Left cardiac atrium (tissue), 4 donors: ENCODE measurements at regions of chr10 and their contacts with region 1.

Region 1: DNA sequence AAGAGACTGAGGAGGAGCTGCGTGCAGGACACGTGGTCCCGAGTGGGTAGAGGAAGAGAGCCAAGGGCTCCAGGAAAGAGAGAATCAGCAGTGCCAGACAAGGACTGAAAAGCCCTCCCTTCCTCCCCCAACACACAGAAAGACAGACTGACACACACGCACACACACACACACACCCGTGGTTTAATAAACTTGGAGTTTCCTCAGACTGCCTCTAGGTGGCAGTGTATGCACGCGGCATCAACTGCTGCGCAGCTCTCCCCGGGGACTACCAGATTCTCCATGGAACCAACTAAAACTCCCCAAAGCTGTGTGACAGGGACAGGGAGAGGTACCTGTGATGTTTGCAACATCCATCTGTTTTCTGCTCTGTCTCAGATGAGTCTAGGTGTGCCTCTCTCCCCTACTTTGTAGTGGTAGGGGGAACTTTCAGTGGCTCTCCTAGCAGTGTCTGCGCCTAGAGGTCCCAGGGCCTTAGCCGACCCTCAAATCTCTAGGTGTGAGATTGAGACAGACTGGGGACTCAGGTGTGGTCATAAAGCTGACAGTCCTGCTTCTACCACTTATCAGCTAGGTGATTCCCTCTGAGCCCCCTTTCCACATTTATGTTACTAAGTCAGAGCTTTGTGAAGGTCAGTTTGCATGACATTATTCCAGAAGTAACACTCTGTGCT is 9.3 kb upstream of the TSPAN14 start:
- DNase-seq: peak; percentile 72
- ATAC-seq: peak; percentile 94 to 96

Region 2: DNA sequence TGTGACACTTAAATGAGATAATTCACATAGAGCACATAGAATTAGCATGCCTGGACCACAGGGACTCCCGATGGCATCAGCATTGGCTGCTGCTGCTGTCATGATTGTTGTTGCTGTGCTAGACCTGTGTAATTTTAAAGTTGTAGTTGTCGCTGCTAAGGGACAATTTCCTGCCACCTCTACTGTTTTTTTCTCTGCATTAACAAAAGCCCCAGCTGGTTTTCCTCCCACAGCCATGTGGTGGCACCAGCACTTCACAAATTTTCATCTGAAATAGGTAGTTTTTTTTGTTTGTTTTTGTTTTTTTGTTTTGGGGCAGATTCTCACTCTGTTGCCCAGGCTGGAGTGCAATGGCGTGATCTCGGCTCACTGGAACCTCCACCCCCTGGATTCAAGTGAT is 61.8 kb before region 1 on chr10:
- intact Hi-C with region 1: loop called (anchors 2 to 10 kb)
- DNase-seq: peak; percentile 36
- ATAC-seq: peak in 1 of 2 donors; percentile 59

Region 3: DNA sequence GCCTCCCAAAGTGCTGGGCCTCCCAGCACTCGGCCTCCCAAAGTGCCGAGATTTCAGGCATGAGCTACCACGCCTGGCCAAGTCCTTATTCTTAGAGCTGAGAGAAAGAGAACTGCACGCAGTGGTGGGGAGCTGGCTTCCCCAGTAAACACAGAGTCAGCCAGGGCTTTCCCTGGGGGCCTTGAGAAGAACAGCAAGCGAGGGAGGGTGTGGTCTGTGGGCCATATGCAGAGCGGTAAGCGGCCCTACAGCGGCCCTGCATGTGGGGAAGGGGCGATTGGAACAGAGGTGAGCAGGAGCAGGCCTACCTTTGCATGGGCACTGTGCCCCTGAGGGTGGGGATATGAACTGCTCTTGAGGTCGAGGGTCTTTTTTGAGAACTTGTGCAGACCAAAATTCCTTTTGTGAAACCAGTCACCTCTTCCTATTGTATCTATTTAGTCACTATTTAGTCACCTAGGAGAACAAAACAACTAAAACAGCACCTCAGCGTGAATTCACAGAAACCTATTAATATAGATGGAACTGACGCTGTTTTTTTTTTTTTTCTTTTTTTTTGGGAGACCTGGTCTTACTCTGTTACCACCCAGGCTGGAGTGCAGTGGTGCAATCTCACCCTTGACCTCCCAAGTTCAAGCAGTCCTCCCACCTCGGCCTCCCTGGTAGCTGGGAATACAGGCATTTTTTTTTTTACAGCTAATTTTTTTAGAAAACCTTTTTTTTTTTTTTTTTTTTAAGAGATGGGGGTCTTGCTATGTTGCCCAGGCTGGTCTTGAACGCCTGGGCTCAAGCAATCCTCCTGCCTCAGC is 56.0 kb after region 1 on chr10:
- intact Hi-C with region 1: loop called (anchors 2 to 5 kb)
- DNase-seq: peak; percentile 69
- ATAC-seq: peak in 1 of 2 donors; percentile 28

Region 4: GRCh38 chr10:80588546-80588945 is 143.8 kb after region 1 on chr10:
- intact Hi-C with region 1: no loop called
- DNase-seq: no peak
- ATAC-seq: no peak

Region 5: GRCh38 chr10:80599424-80599847 is 154.7 kb after region 1 on chr10:
- intact Hi-C with region 1: loop called in 1 of 2 experiments (anchors 5 kb)
- DNase-seq: peak; percentile 41
- ATAC-seq: peak in 1 of 2 donors; percentile 71

Region 6: DNA sequence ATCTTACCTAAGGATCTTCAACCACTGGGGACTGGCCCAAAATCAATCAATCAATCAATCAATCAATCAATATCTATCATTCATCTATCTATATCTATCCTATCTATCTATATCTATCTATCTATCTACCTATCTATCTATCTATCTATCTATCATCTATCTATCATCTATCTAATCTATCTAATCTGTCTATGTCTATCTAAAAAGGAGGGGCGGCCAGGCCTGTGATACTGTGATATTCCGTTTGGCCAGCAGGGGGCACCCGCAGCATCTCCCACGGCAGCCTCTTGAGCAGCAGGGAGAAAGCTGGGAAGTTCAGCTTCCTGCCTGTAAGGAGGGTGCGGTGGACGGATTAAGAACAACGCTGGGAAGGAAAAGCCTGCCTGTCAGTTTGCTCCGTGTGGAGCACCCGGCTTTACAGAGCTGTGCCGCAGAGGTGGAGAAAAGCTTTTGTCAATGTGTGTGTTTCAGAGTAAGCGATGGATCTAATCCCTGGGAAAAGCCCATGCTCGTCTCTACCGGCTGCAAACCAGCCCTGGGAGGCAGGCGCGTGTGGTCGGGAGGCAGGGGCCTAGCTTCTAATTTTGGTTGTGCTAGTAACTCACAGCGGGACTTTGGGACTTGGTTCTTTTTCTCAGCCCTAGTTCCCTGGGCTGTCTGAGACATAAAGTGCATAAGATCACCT is 217.9 kb after region 1 on chr10:
- intact Hi-C with region 1: loop called in 1 of 2 experiments (anchors 10 kb)
- DNase-seq: peak; percentile 83
- ATAC-seq: peak; percentile 82 to 89

Region 7: GRCh38 chr10:80924063-80924952 is 479.5 kb after region 1 on chr10:
- intact Hi-C with region 1: loop called in 1 of 2 experiments (anchors 10 kb)
- DNase-seq: peak; percentile 34
- ATAC-seq: peak; percentile 53 to 67